Mammary epithelial cell (primary cell): ENCODE measurements at regions of chr3 and their contacts with region 1.

Region 1: DNA sequence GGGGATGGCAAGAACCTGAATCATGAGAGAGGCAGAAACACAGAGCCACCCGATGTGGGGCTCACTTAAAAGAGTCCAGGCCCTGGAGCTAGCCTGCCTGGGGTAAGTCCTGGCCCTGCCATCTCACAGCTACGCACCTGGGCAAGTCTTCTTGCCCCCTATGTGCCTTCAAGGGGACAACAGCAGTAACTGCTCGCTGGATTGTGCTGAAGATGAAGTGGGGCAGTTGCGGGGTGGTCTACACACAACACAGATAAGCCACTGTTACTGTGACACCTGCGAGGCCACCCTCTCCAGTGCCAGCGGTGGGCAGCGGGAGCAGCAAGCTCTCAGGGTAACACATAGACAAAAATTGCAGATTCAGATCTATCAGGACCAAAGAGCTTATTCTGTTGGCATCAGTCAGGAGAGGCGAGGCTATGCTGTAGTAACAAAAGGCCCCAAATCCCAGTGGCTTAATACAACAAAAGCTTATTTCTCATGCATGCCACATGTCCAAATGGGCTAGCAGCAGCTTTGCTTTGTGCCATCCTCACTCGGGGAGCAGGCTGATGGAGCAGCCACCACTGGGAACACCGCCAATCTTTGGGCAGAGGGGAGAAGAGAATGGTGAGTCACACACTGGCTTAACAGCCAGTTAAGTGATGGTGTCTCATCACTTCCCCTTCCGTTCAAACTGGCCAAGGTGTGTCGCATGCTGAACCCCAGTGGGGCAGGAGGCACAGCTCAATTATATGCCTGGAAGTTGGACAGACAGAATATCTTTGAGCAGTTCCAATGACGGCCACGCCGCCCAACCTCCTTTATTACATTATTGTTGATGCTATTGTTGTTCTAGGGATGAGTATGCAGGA is 78.3 kb downstream of the WNT7A start:
- DNase-seq: peak; percentile 80
- H3K4me3 ChIP-seq: no peak overlapping the region
- H3K27ac ChIP-seq: no peak overlapping the region
- H3K4me1 ChIP-seq: peaks cover 7% of the 10 kb centered on the region
- H3K27me3 ChIP-seq: no peaks in the 10 kb centered on the region
- CTCF ChIP-seq: no peak

Region 2: GRCh38 chr3:13687517-13687943 is 114.1 kb before region 1 on chr3:
- CTCF ChIA-PET with region 1: no interaction called
- dilution Hi-C with region 1: loop called (anchors 10 kb)
- in situ Hi-C with region 1: no loop called
- intact Hi-C with region 1: no loop called
- DNase-seq: no peak
- H3K4me3 ChIP-seq: no peak overlapping the region
- H3K27ac ChIP-seq: no peak overlapping the region
- H3K4me1 ChIP-seq: no peaks in the 10 kb centered on the region
- H3K27me3 ChIP-seq: no peaks in the 10 kb centered on the region
- CTCF ChIP-seq: no peak